Pancreas (tissue), 10 donors: ENCODE measurements at regions of chr9 and their contacts with region 1.

Region 1: DNA sequence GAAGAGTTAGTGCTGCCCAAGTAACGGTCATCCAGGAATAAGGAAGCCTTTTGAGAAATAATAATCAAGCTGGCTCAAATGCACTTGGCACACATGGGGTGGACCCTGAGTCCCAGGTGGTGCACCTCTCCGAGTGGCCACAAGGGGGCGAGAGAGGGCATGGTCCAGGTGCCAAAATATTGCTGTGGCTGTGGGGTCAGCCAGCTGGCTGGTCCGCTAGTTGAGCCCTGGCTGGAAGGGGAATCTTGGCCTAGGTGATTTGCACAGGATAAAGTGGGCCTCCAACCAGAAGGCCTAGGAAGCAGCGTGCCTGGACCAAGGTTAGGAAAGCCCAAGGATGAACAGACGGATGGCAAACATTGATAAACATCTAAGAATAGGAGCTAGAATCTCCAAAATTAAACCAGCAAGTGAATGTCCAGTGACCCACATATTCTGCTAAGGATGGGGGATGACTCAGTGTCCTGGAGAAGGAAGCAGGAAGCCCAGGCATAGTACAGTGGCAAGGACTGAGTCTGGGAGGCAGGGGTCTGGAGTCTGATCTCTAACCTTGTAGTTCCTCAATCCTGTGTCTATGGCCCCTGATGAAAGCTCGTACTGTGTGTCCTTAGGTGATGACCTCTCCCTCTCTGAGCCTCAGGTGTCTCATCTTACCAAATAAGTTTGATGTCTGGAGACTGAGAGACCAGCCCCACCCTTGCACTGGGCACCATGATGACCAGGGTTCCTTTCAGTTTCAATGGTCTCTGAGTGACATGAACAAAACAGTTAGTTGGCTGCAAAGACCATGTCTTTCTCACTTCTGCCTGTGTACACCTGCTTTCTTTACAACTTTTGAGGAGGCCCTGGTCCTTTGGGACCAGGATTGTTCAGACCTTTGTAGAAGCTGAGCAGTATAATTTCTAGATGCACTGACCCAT is 19.2 kb upstream of the SHB start:
- DNase-seq: peak; percentile 61 to 95 (median 84)
- ATAC-seq: peak; percentile 82 to 97 (median 92)
- H3K4me3 ChIP-seq: no peak overlapping the region
- H3K27ac ChIP-seq: no peak overlapping the region
- H3K4me1 ChIP-seq: no peaks in the 10 kb centered on the region
- H3K27me3 ChIP-seq: no peaks in the 10 kb centered on the region
- CTCF ChIP-seq: peak; percentile 92 to 99 (median 98)

Region 2: DNA sequence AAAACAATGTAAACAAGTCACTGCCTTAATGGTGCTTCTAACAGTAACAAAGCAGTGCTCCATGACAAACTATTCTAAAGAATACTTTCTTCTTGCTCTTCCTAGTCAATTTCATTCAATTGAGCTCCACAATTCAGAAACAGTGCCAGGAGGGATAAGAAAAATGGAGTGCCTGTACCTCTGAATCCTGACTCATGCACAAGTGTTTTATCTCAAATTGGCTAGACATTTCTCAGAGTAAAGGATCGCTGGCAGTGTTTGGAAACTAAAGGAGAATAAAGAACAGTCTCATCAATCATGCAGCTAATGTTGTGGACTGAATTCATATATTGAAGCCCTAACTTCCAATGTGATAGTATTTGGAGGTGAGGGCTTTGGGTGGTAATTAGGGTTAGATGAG is 211.9 kb before region 1 on chr9:
- intact Hi-C with region 1: no loop called
- DNase-seq: no peak
- ATAC-seq: no peak
- H3K4me3 ChIP-seq: no peak overlapping the region
- H3K27ac ChIP-seq: no peak overlapping the region
- H3K4me1 ChIP-seq: no peaks in the 10 kb centered on the region
- H3K27me3 ChIP-seq: no peaks in the 10 kb centered on the region
- CTCF ChIP-seq: no peak

Region 3: DNA sequence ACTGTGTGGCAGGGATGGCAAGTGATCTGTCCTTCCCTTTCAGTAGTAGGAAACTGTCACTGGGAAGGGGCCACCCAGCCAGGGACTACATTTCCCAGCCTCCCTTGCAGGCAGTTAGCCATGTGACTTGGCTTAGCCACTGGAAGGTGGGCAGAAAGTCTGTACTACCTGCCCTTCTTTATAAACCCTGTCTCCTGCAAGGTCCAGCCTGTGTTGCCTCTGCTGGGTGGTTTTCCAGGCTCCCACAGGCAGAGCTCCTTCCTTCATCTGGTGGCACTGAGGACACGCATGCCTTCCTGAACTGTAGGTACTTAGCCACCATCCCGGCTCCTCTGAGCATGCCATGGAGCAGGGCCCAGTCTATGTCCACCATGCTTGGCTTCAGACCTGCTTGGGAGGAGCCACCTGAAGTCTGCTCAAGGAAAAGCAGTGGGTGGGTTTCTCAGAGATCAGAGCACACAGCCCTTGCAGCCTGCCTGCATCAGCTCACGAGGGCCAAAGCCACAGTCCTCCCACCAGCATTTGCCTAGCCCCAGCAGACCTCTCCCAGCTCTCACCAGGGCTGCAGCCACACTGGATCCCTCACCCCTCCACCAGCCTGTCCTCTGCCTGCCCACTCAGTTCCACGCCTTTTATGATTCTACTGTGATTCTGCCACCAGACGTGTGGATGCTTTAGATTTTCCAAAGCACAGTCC is 167.6 kb before region 1 on chr9:
- intact Hi-C with region 1: loop called in 1 of 3 experiments (anchors 10 kb)
- DNase-seq: peak in 1 of 6 donors; percentile 11
- ATAC-seq: peak in 3 of 4 donors; percentile 21 to 50 (median 49)
- H3K4me3 ChIP-seq: no peak overlapping the region
- H3K27ac ChIP-seq: no peak overlapping the region
- H3K4me1 ChIP-seq: peaks cover 8 to 12% (median 12%) of the 10 kb centered on the region in 3 donors
- H3K27me3 ChIP-seq: no peaks in the 10 kb centered on the region
- CTCF ChIP-seq: no peak

Region 4: DNA sequence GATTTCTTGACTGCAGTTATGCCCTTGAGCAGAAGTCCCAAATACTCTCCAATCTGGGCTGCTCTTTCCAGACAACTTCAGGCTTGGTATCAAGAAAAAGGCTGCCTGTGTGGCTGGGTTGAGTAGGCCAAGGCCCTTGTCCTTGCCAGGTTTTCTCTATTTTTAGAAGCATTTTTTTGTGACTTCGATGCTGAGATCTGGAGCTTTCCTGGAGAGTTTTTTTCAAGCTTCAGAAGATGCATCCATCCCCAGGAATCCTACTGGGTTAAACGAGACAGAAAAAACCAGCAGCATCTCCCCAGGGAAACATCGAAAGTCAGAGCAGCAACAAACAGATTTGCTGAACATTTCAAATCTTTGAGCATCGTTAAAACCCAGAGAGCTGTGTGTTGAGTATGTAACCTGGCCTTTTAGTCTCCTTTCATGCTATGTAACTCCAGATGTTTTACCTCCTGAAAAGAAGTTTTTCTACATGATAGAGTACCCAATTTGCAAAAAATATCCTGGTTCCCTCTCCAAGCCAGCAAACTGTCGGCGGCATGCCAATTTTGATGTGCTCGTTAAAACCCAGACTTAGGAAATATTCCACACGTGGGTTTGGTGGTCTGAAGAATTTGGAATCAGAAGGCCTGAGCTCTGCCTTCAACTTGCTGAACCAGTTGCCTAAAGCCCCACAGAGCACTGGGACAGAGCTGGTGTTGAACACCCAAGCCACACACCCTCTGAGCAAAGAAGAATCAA is 206.1 kb after region 1 on chr9:
- intact Hi-C with region 1: no loop called
- DNase-seq: no peak
- ATAC-seq: no peak
- H3K4me3 ChIP-seq: no peak overlapping the region
- H3K27ac ChIP-seq: no peak overlapping the region
- H3K4me1 ChIP-seq: no peaks in the 10 kb centered on the region
- H3K27me3 ChIP-seq: no peaks in the 10 kb centered on the region
- CTCF ChIP-seq: no peak

Region 5: GRCh38 chr9:38346811-38347210 is 258.5 kb after region 1 on chr9:
- intact Hi-C with region 1: loop called in 2 of 3 experiments (anchors 10 kb)
- DNase-seq: no peak
- ATAC-seq: no peak
- H3K4me3 ChIP-seq: no peak overlapping the region
- H3K27ac ChIP-seq: no peak overlapping the region
- H3K4me1 ChIP-seq: no peaks in the 10 kb centered on the region
- H3K27me3 ChIP-seq: no peaks in the 10 kb centered on the region
- CTCF ChIP-seq: no peak

Region 6: GRCh38 chr9:38362852-38363593 is 274.8 kb after region 1 on chr9:
- intact Hi-C with region 1: loop called in 1 of 3 experiments (anchors 10 kb)
- DNase-seq: peak in 3 of 6 donors; percentile 44 to 63 (median 47)
- ATAC-seq: peak; percentile 86 to 97 (median 96)
- H3K4me3 ChIP-seq: no peak overlapping the region
- H3K27ac ChIP-seq: no peak overlapping the region
- H3K4me1 ChIP-seq: no peaks in the 10 kb centered on the region
- H3K27me3 ChIP-seq: no peaks in the 10 kb centered on the region
- CTCF ChIP-seq: peak; percentile 20 to 63 (median 50)